H1 (cell line): ENCODE measurements at regions of chr5 and their contacts with region 1.

Region 1: DNA sequence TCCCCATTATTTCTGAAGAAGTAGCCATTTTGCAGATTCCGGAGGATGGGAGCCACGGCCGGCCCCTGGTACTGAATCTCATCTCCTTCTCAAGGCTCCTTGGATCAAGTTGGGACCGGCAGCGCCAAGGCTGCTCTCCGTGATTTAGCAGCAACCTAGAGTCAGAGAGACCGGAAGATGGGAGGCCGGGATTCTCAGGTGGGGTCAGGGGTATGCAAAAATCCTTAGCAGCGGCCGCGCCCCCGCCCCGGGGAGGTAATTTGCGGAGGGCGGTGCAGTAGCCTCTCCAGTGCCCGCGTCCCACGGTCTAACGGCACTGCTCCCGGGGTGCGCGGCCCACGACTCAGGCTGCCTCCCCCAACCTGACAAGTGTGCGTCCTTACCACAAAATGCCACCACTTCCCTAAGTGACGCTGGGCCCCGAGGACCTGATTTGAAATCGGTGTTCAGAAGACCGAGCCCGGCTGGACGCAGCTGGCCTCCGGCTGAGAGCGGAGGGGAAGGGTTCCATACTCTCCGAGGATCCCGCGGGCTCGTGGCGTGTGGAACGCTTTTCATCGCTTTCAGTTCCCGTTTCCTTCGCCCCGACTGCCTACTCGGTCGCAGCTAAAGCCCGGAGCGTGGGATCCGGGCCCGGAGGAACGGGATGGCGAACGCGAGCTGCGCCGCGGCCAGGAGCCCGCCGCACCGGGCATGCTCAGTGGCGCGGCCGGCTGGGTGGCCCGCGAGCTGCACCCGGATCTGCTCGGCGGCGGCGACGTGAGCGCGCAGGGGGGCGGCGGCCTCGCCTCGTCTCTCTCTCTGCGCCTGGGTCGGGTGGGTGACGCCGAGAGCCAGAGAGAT is at the start of gene SCAMP1:
- DNase-seq: peak; percentile 88 to 99
- H3K4me3 ChIP-seq: peak within 1 kb of the TSS; percentile 82 to 97 (median 92)
- H3K27ac ChIP-seq: peak within 1 kb of the TSS; percentile 77
- H3K4me1 ChIP-seq: peaks cover 0 to 3% (median 2%) of the 10 kb centered on the region in 4 experiments; a peak in 4 of 7 replicates
- H3K27me3 ChIP-seq: no peaks in the 10 kb centered on the region
- CTCF ChIP-seq: peak; percentile 34 to 49 (median 44)
- EP300 ChIP-seq: 0 out of 3 replicates have a peak, but pooled peaks of 1 of the 2 experiments have one; percentile 52
- POLR2A ChIP-seq: peak in 1 of 2 experiments; percentile 39; a peak in 2 of 3 replicates
- RAD21 ChIP-seq: peak; percentile 17 to 41; a peak in 3 of 4 replicates
- total RNA-seq, gene SCAMP1: 51.4 and 55.9 TPM in 2 replicates

Region 2: GRCh38 chr5:78294248-78295034 is 65.6 kb before region 1 on chr5 and contains the start of gene AP3B1:
- CTCF ChIA-PET with region 1: interaction called, 4 read pairs
- POLR2A ChIA-PET with region 1: interaction called, 21 read pairs
- DNase-seq: peak; percentile 99
- H3K4me3 ChIP-seq: peak within 1 kb of the TSS; percentile 80 to 95 (median 82)
- H3K27ac ChIP-seq: peak within 1 kb of the TSS; percentile 73
- H3K4me1 ChIP-seq: no peaks in the 10 kb centered on the region; a peak in 1 of 7 replicates
- H3K27me3 ChIP-seq: no peaks in the 10 kb centered on the region
- CTCF ChIP-seq: no peak
- EP300 ChIP-seq: no peak; a peak in 1 of 3 replicates
- POLR2A ChIP-seq: peak; percentile 79 to 80
- RAD21 ChIP-seq: no peak
- total RNA-seq, gene AP3B1: 48.3 and 50.0 TPM in 2 replicates